GM12878 (cell line): ENCODE measurements at regions of chr19 and their contacts with region 1.

Region 1: DNA sequence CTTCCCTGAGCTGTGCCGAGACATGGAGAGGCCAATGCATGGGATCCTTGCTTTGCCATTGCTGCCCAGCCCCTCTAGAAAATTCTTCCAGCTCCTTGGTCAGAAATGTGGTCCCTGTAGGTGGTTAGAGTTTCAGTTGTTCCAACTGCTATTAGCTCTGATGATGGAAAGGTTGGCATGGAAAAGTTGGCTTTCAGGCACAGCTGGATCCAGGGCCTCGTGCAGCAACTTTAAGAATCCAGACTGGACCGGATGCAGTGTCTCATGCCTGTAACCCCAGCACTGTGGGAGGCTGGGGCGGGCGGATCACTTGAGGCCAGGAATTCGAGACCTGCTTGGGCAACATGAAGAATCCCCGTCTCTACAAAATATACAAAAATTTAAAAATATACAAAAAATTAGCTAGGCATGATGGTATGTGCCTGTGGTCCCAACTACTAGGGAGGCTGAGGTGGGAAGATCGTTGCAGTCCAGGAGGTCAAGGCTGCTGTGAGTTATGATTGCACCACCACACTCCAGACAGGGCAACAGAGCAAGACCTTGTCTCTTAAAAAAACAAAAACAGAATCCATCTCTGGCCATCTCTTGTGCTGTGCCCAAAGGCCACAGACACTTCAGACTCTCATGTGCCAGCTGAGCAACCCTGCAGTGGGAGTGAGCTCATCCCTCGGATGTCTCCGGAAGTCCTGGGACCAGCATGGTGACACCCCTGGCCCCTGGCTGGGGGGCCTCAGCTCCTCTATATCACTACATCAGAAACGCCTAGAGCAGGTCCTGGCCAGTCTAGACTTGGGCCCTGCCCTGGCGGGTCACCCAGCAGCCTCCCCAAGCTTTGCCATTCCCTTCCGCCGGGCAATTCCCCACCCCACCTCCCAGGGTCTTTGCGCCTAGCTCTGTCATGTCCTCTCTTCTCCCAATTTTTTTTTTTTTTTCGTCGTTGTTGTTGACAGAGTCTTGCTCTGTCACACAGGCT is 16.8 kb downstream of the MEX3D start:
- DNase-seq: no peak
- ATAC-seq: no peak
- H3K4me3 ChIP-seq: no peak overlapping the region
- H3K27ac ChIP-seq: no peak overlapping the region
- H3K4me1 ChIP-seq: no peaks in the 10 kb centered on the region
- H3K27me3 ChIP-seq: no peaks in the 10 kb centered on the region
- CTCF ChIP-seq: no peak
- EP300 ChIP-seq: no peak
- POLR2A ChIP-seq: no peak
- RAD21 ChIP-seq: no peak

Region 2: GRCh38 chr19:1767464-1767933 is 216.1 kb after region 1 on chr19:
- CTCF ChIA-PET with region 1: interaction called, 57 read pairs
- POLR2A ChIA-PET with region 1: no interaction called
- RAD21 ChIA-PET with region 1: interaction called, 22 read pairs
- SMC1A ChIA-PET with region 1: interaction called, 5 read pairs
- in situ Hi-C with region 1: loop called (anchors 10 kb)
- intact Hi-C with region 1: loop called (anchors 5 kb)
- DNase-seq: no peak
- ATAC-seq: peak; percentile 88
- H3K4me3 ChIP-seq: no peak overlapping the region
- H3K27ac ChIP-seq: no peak overlapping the region
- H3K4me1 ChIP-seq: no peaks in the 10 kb centered on the region
- H3K27me3 ChIP-seq: peaks cover 6 to 10% of the 10 kb centered on the region in 2 experiments; a peak in 3 of 4 replicates
- CTCF ChIP-seq: peak; percentile 87 to 98 (median 91)
- EP300 ChIP-seq: no peak
- POLR2A ChIP-seq: no peak
- RAD21 ChIP-seq: peak; percentile 85

Region 3: DNA sequence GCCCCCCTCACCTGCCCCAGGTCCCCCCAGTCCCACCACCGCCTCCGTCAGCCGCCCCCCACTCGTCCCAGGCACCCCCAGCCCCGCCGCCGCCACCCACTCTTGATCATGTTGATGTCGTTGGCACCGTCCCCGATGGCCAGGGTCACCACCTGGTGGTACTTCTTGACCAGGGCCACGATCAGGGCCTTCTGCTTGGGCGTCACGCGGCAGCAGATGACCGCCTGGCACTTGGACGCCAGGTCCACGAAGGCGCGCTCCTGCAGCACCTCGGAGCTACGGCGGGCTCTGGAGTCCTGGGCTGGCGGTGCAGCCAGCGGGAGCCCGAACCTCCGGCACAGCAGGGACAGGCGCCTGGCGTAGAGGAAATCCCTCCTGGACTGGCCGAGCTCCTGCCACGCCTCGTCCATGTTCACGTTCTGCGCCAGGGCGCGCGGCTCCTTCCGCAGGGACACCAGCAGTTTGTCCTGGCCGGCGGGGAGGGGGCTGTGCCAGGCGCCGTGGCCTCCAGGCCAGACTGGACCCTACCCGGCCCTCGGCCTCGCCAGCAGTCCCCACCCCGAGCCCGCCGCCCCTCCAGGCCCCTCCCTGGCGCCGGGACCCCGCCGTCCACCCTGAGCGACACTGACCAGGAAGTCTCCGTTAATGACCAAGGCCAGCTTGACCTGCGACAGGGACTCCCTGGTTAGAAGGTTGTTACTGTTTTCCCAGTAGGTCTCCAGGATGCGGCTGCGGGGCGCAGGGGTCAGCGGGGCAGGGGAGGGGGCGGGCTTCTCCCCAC is 238.1 kb after region 1 on chr19:
- CTCF ChIA-PET with region 1: interaction called, 16 read pairs
- POLR2A ChIA-PET with region 1: no interaction called
- RAD21 ChIA-PET with region 1: interaction called, 12 read pairs
- SMC1A ChIA-PET with region 1: no interaction called
- in situ Hi-C with region 1: no loop called
- intact Hi-C with region 1: no loop called
- DNase-seq: no peak
- ATAC-seq: no peak
- H3K4me3 ChIP-seq: no peak overlapping the region
- H3K27ac ChIP-seq: no peak overlapping the region
- H3K4me1 ChIP-seq: no peaks in the 10 kb centered on the region
- H3K27me3 ChIP-seq: no peaks in the 10 kb centered on the region
- CTCF ChIP-seq: no peak
- EP300 ChIP-seq: no peak
- POLR2A ChIP-seq: no peak
- RAD21 ChIP-seq: no peak